ENCODE measurements at regions of chr14 and their contacts with region 1.

Region 1: DNA sequence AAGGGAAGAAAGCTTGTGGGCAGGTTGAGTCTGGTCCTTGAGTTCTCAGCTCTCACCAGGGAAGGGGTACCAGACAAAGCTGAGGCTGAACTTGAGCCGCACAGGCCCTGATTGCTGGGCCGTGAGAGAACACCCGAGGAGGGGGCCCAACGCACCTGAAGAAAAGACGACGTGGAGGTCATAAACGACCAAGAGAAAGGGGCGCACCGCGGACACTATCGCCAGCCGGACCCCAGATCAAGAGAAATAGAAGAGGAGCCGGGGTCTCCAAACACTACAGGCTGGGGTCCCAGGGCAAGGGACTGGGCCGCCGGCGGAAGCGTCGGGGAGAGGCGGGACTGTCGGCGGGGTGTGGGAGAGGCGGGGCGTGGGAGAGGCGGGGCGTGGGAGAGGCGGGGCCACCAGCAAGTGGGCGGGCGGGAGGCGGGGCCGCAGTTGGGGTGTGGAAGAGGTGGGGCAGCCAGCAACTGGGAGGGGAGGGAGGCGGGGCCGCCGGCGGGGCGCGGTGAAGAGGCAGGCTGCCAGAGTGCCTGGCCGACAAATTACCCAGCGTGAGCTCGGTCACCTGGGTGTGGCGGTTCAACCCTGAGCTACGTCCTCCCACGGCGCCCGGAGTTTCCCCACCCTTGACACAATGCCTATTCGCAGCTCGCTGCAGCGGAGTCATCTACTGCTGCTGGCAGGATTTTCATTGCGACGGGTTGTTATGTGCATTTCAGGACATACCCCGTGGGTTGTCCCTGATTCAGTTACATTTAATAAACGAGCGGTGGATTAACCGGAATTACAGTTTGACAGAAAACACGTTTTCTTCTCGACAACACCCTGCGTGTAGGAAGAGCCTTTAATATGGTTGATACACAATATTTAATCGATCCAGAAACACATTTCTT is 15.5 kb upstream of the NEMF start:
- DNase-seq: peak; percentile 86
- H3K4me3 ChIP-seq: peak overlapping the region; percentile 57
- H3K27ac ChIP-seq: peak overlapping the region; percentile 71
- H3K4me1 ChIP-seq: peaks cover 6% of the 10 kb centered on the region
- H3K27me3 ChIP-seq: no peaks in the 10 kb centered on the region
- CTCF ChIP-seq: no peak

Region 2: GRCh38 chr14:49852301-49853157 is 15.5 kb before region 1 on chr14 and contains the start of gene NEMF:
- CTCF ChIA-PET with region 1: interaction called, 19 read pairs
- POLR2A ChIA-PET with region 1: no interaction called
- intact Hi-C with region 1: no loop called
- DNase-seq: peak; percentile 95
- H3K4me3 ChIP-seq: peak within 1 kb of the TSS; percentile 86
- H3K27ac ChIP-seq: peak within 1 kb of the TSS; percentile 87
- H3K4me1 ChIP-seq: peaks cover 10% of the 10 kb centered on the region
- H3K27me3 ChIP-seq: no peaks in the 10 kb centered on the region
- CTCF ChIP-seq: peak; percentile 92
- total RNA-seq, gene NEMF: 77.5 and 80.2 TPM in 2 replicates

Region 3: DNA sequence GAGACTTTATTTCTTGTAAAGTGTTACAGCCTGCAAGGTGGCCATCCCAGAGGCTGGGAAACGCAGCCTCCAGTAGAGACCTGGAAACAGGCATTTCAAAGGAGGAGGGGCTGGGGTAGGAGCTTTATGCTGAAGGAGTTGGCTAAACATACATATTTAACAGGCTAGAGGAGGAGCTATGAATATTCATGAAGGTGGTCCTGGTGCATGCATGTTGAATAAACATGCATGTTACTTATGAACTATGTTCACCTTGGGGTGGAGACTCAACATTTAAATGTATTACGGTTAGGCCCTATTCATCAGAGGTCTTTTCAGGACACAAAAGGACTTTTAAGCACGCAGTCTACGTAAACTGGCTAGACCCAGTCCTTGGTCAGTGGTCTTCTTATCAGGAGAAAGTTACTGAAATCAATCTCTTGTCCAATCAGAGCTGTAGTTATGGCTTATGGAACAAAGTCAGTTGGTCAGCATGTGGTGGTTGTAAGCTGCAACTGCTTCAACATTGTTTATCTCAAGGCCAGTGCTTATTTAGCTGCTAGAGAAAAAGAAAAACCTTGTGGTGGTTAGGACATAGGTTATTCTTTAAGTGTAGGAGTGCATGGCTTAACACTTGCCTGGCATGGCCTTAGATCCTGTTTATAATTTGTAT is 13.4 kb after region 1 on chr14:
- CTCF ChIA-PET with region 1: interaction called, 14 read pairs
- POLR2A ChIA-PET with region 1: no interaction called
- intact Hi-C with region 1: no loop called
- DNase-seq: no peak
- H3K4me3 ChIP-seq: no peak overlapping the region
- H3K27ac ChIP-seq: no peak overlapping the region
- H3K4me1 ChIP-seq: peaks cover 20% of the 10 kb centered on the region
- H3K27me3 ChIP-seq: no peaks in the 10 kb centered on the region
- CTCF ChIP-seq: no peak

Region 4: DNA sequence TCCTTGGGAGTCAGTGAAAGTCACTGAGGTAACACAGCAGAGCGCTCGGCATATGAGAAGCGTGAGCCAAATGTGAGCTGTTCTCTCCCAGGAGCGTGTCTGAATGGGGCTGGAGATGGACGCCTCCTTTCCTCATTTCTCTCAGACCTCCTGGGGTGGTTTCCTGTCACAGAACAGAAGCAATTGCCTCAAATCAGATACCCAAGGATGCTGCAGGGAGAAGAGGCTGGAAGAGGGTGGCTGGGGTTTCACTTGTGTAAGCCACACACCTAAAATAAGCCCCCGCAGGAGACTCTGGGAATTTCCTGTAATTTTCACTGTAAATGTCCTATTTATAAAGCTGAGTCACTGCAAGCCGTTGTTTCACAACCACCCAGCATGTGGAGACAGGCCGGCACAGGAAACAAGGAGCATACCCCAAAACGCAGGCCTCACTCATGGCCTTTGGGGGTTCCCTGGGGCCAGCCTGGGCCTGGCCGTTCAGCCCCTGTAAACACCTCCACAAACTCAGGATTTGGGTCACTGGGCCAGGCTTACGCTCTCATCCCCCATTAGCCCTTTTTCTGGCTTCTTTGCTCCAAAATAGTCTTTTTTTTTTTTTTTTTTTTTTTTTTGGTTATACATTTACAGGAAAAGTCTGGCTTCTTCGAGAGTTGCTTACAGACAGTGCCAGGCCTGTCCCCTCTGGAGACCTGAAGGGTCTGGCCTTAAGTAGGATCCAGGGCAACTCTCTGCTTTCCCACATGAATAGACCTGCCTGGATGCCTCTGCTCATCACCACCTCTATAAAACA is 193.0 kb after region 1 on chr14:
- CTCF ChIA-PET with region 1: interaction called, 12 read pairs
- POLR2A ChIA-PET with region 1: no interaction called
- intact Hi-C with region 1: loop called (anchors 1 kb)
- DNase-seq: peak; percentile 97
- H3K4me3 ChIP-seq: no peak overlapping the region
- H3K27ac ChIP-seq: peak overlapping the region; percentile 93
- H3K4me1 ChIP-seq: peaks cover 42% of the 10 kb centered on the region
- H3K27me3 ChIP-seq: no peaks in the 10 kb centered on the region
- CTCF ChIP-seq: 0 out of 2 replicates have a peak, but pooled peaks have one; percentile 13

Region 5: DNA sequence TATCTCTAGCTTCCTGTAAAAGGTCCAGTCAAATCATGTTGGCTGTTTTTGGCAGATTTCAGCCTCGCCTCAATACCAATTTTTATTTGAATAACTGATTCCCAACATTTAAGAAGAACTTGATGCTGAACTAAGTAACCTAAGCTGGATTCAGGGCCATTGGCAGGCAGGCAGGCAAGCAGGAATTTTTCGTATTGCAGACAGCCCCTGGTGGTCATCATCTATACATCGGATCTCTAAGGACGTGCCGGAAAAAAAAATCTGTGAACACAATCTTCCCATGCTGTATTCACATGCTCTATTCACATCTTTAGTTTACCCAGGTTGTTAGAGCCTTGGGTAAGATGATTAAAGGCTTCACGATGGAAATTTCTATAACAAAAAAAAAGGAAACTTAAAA is 241.3 kb after region 1 on chr14:
- CTCF ChIA-PET with region 1: interaction called, 6 read pairs
- POLR2A ChIA-PET with region 1: no interaction called
- intact Hi-C with region 1: loop called (anchors 1 kb)
- DNase-seq: peak; percentile 40
- H3K4me3 ChIP-seq: no peak overlapping the region
- H3K27ac ChIP-seq: no peak overlapping the region
- H3K4me1 ChIP-seq: no peaks in the 10 kb centered on the region
- H3K27me3 ChIP-seq: no peaks in the 10 kb centered on the region
- CTCF ChIP-seq: peak; percentile 37

Region 6: DNA sequence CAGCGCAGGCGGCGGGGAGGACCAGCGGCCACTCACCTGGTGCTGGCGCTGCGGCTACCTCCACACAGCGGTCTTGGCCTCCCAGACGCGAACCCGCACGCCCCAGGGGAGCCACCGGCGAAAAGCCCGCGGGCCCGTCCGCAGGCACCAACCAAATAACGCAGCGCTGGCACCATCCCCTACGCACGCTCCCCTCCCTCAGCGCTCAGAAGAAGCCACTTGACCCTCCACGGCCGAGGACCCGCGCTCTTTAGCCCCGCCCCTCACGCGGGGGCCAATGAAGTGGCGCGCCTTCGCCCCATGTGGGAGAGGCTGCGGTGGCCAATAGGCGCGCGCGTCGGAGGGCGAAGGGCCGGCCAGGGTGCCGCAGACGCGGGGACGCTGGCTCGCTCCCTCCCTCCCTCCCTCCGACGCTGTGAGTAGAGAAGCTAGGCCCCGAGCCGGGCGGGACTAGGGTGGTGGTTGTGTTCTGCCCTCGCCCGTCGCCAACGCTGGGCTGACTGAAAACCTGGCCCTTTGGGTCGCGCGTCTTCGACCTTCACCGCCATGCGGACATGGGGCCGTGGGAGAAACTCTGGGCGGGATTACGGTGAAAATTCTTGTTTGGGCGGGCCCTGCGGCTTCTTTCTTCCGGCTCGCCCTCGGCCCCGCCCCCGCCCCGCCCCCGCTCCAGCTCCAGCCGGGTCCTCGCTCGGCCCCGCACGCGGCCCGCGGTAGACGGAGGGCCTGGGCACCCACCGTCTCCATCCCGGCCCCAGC is 444.1 kb after region 1 on chr14 and contains the starts of genes DMAC2L and L2HGDH:
- CTCF ChIA-PET with region 1: no interaction called
- POLR2A ChIA-PET with region 1: no interaction called
- intact Hi-C with region 1: loop called (anchors 5 kb)
- DNase-seq: peak; percentile 98
- H3K4me3 ChIP-seq: peak within 1 kb of the TSS; percentile 85
- H3K27ac ChIP-seq: peak within 1 kb of the TSS; percentile 94
- H3K4me1 ChIP-seq: peaks cover 11% of the 10 kb centered on the region
- H3K27me3 ChIP-seq: no peaks in the 10 kb centered on the region
- CTCF ChIP-seq: no peak
- total RNA-seq, gene DMAC2L: 18.4 and 20.4 TPM in 2 replicates
- total RNA-seq, gene L2HGDH: 17.4 and 22.9 TPM in 2 replicates

Region 7: DNA sequence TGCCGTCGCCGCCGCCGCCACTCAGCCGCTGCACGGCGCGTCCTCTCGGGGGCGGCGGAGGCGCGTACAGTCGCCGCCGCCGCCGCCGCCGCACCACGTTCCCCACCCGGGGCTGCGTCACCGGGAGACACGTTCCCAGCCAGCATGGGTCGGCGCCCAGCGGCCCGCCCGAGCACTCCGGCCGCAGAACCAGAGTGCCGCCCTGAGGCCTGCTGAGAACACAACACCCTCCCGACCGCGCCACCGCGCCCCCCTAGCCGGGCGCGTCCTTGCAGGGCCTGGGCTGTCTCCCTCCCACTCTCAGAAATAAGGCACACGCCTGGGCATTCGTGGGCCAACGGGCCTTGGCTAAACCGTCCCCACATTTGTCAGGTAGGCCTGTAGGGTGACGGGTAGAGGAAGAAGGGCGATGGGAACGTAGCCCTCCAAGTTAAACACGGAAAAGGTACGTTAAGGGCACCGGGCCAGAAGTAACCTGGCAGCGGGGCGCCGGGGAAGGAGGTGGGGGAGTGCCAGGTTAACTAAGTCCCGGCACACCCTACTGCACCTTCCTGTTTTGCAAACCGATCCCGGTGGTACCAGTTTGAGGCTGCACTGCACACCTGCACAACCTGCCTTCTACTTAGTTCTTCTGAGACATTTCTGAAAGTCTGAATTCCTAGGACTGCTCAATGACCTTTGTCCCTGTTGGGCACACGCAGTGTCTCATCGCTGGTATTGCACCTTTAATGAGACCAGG is 664.6 kb after region 1 on chr14 and contains the start of gene MAP4K5:
- CTCF ChIA-PET with region 1: no interaction called
- POLR2A ChIA-PET with region 1: no interaction called
- intact Hi-C with region 1: loop called (anchors 5 kb)
- DNase-seq: peak; percentile 95
- H3K4me3 ChIP-seq: peak within 1 kb of the TSS; percentile 91
- H3K27ac ChIP-seq: peak within 1 kb of the TSS; percentile 90
- H3K4me1 ChIP-seq: peaks cover 18% of the 10 kb centered on the region
- H3K27me3 ChIP-seq: no peaks in the 10 kb centered on the region
- CTCF ChIP-seq: peak; percentile 88
- total RNA-seq, gene MAP4K5: 57.9 and 58.9 TPM in 2 replicates